ENCODE measurements at regions of chr11 and their contacts with region 1.

Region 1: GRCh38 chr11:66906061-66906735 is 49.3 kb downstream of the LRFN4 start:
- DNase-seq: no peak
- H3K4me3 ChIP-seq: no peak overlapping the region
- CTCF ChIP-seq: no peak
- POLR2A ChIP-seq: no peak

Region 2: GRCh38 chr11:68081691-68082090 is 1175.5 kb after region 1 on chr11:
- intact Hi-C with region 1: loop called (anchors 10 kb)
- DNase-seq: no peak
- H3K4me3 ChIP-seq: no peak overlapping the region
- CTCF ChIP-seq: no peak
- POLR2A ChIP-seq: no peak